ENCODE measurements at regions of chr14 and their contacts with region 1.

Region 1: GRCh38 chr14:91796617-91797347 is 64.9 kb upstream of the CATSPERB start:
- DNase-seq: no peak
- ATAC-seq: no peak
- H3K4me3 ChIP-seq: no peak overlapping the region
- H3K4me3 Mint-ChIP-seq: no peak overlapping the region
- H3K27ac ChIP-seq: no peak overlapping the region
- H3K27ac Mint-ChIP-seq: no peak overlapping the region
- H3K4me1 ChIP-seq: no peaks in the 10 kb centered on the region
- H3K4me1 Mint-ChIP-seq: no peaks in the 10 kb centered on the region
- H3K27me3 ChIP-seq: no peaks in the 10 kb centered on the region
- H3K27me3 Mint-ChIP-seq: peaks cover 9% of the 10 kb centered on the region
- CTCF ChIP-seq: no peak

Region 2: DNA sequence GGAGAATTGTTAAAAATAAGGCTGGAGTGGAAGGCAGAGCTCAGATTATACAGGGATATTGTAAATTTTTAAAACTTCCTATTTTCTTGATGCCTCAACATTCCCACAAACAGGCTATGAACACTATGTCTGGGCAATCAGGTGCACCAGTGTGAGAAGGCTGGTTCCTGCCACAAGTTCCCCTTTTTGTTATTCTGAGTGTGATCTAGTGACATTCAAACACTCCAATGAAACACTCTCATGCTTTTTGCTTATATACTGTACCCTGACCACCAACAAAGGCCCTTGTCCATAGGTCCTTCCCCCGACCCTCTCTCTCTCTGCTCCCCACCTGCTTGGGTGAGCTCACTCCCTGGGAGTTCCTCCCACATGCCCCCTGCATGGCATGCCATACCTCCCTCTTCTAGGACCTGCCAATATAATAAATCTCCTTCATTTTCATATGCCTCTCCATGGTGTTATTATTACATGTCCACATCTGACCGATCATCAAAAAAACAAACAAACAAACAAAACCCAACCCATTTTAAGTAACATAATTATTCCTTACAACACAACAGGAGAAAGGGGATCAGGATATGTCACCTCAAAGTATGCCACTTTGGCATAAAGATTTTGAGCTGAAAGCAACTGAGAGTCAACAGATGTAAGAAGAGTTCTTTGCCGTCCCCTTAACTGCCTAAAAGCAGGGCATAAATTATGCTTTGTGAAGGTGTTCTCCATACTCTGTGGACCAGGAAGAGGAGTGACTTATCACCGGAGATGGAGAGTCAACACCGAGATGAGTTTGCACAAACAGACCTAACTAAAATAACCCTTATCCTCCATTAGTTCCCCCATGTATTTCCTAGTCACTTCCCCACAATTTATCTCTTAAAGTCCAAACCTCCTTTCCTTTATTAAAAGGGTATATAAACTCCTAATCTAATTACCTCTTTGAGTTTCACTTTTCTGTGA is 22.4 kb before region 1 on chr14:
- CTCF ChIA-PET with region 1: no interaction called
- POLR2A ChIA-PET with region 1: no interaction called
- intact Hi-C with region 1: no loop called
- DNase-seq: peak; percentile 64
- ATAC-seq: peak; percentile 71
- H3K4me3 ChIP-seq: peak overlapping the region in 1 of 5 experiments; percentile 7
- H3K4me3 Mint-ChIP-seq: peak overlapping the region; percentile 60
- H3K27ac ChIP-seq: no peak overlapping the region
- H3K27ac Mint-ChIP-seq: no peak overlapping the region
- H3K4me1 ChIP-seq: peaks cover 11 to 18% of the 10 kb centered on the region in 2 donors
- H3K4me1 Mint-ChIP-seq: peaks cover 16% of the 10 kb centered on the region
- H3K27me3 ChIP-seq: peaks cover 0 to 5% (median 0%) of the 10 kb centered on the region in 4 experiments
- H3K27me3 Mint-ChIP-seq: peaks cover 12% of the 10 kb centered on the region
- CTCF ChIP-seq: no peak

Region 3: DNA sequence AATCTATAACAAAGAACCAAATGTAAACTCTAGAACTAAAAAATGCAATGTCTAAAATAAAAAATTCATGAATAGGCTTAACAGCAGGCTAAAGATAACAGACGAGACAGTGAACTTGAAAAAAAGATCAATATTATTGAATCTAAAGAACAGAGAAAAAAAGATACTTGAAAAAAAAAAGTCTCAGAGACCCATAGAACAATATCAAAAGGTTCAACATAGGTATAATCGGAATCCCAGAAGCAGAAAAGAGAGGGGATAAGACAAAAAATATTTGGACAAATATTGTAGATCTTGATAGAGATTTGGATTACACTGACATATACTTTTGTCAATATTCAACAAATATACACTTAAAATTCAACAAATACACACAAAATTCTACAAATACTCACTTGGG is 13.9 kb after region 1 on chr14:
- CTCF ChIA-PET with region 1: no interaction called
- POLR2A ChIA-PET with region 1: no interaction called
- intact Hi-C with region 1: loop called (anchors 1 kb)
- DNase-seq: no peak
- ATAC-seq: no peak
- H3K4me3 ChIP-seq: no peak overlapping the region
- H3K4me3 Mint-ChIP-seq: no peak overlapping the region
- H3K27ac ChIP-seq: no peak overlapping the region
- H3K27ac Mint-ChIP-seq: no peak overlapping the region
- H3K4me1 ChIP-seq: no peaks in the 10 kb centered on the region
- H3K4me1 Mint-ChIP-seq: no peaks in the 10 kb centered on the region
- H3K27me3 ChIP-seq: peaks cover 0 to 6% (median 0%) of the 10 kb centered on the region in 4 experiments
- H3K27me3 Mint-ChIP-seq: peaks cover 22% of the 10 kb centered on the region
- CTCF ChIP-seq: no peak